ENCODE measurements at regions of chr14 and their contacts with region 1.

Region 1: GRCh38 chr14:73491256-73492042 is 716 bp downstream of the RIOX1 start:
- DNase-seq: peak in 8 of 9 donors; percentile 7 to 79 (median 60)
- ATAC-seq: peak; percentile 79
- H3K4me3 ChIP-seq: peak overlapping the region; percentile 91
- H3K4me3 Mint-ChIP-seq: peak overlapping the region; percentile 84 to 90 (median 88)
- H3K27ac ChIP-seq: peak overlapping the region; percentile 86
- H3K27ac Mint-ChIP-seq: peak overlapping the region in 8 of 9 donors; percentile 83 to 90 (median 88)
- H3K4me1 ChIP-seq: peaks cover 21 to 27% of the 10 kb centered on the region in 2 donors
- H3K4me1 Mint-ChIP-seq: peaks cover 8 to 59% (median 48%) of the 10 kb centered on the region in 7 donors
- H3K27me3 ChIP-seq: no peaks in the 10 kb centered on the region
- H3K27me3 Mint-ChIP-seq: peaks cover 0 to 17% (median 0%) of the 10 kb centered on the region in 5 donors

Region 2: GRCh38 chr14:73136387-73137225 is 354.8 kb before region 1 on chr14 and contains the start of gene PSEN1:
- CTCF ChIA-PET with region 1: no interaction called
- POLR2A ChIA-PET with region 1: interaction called, 6 read pairs
- intact Hi-C with region 1: loop called (anchors 1 kb)
- DNase-seq: peak; percentile 97 to 100 (median 98)
- ATAC-seq: peak; percentile 96
- H3K4me3 ChIP-seq: peak within 1 kb of the TSS; percentile 93
- H3K4me3 Mint-ChIP-seq: peak within 1 kb of the TSS; percentile 82 to 99 (median 91)
- H3K27ac ChIP-seq: peak within 1 kb of the TSS; percentile 98
- H3K27ac Mint-ChIP-seq: peak within 1 kb of the TSS; percentile 71 to 99 (median 96)
- H3K4me1 ChIP-seq: peaks cover 7 to 17% of the 10 kb centered on the region in 2 donors
- H3K4me1 Mint-ChIP-seq: peaks cover 17 to 39% (median 36%) of the 10 kb centered on the region in 7 donors
- H3K27me3 ChIP-seq: no peaks in the 10 kb centered on the region
- H3K27me3 Mint-ChIP-seq: no peaks in the 10 kb centered on the region
- total RNA-seq, gene PSEN1: 32.7 to 55.8 (median 49.3) TPM

Region 3: DNA sequence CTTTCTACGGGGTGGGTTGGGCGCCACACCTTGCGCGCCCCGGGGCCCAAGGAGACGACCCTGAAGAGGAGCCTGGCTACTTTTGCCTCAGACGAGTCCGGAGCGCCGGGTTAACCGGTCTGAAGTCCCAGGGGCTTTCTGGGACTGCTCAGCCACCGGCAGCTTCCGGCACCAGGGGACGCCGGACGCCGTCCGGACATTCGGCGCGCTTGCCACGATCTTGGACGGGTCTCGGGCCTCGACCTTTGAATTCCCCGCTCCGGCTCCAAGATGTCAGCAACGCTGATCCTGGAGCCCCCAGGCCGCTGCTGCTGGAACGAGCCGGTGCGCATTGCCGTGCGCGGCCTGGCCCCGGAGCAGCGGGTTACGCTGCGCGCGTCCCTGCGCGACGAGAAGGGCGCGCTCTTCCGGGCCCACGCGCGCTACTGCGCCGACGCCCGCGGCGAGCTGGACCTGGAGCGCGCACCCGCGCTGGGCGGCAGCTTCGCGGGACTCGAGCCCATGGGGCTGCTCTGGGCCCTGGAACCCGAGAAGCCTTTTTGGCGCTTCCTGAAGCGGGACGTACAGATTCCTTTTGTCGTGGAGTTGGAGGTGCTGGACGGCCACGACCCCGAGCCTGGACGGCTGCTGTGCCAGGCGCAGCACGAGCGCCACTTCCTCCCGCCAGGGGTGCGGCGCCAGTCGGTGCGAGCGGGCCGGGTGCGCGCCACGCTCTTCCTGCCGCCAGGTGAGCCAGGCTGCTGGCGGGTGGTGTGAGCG is 100.4 kb after region 1 on chr14 and contains the start of gene ACOT4:
- CTCF ChIA-PET with region 1: interaction called, 3 read pairs
- POLR2A ChIA-PET with region 1: interaction called, 11 read pairs
- intact Hi-C with region 1: no loop called
- DNase-seq: peak; percentile 43 to 77 (median 73)
- ATAC-seq: peak; percentile 93
- H3K4me3 ChIP-seq: peak within 1 kb of the TSS; percentile 74
- H3K4me3 Mint-ChIP-seq: peak within 1 kb of the TSS; percentile 61 to 87 (median 79)
- H3K27ac ChIP-seq: peak within 1 kb of the TSS; percentile 63
- H3K27ac Mint-ChIP-seq: peak within 1 kb of the TSS in 8 of 9 donors; percentile 29 to 89 (median 70)
- H3K4me1 ChIP-seq: no peaks in the 10 kb centered on the region
- H3K4me1 Mint-ChIP-seq: peaks cover 0 to 19% (median 5%) of the 10 kb centered on the region in 7 donors
- H3K27me3 ChIP-seq: no peaks in the 10 kb centered on the region
- H3K27me3 Mint-ChIP-seq: peaks cover 0 to 10% (median 0%) of the 10 kb centered on the region in 5 donors
- total RNA-seq, gene ACOT4: 0.69 to 1.0 (median 0.89) TPM

Region 4: GRCh38 chr14:73644531-73645247 is 153.2 kb after region 1 on chr14 and contains the start of gene DNAL1:
- CTCF ChIA-PET with region 1: no interaction called
- POLR2A ChIA-PET with region 1: interaction called, 17 read pairs
- intact Hi-C with region 1: loop called in 1 of 2 experiments (anchors 1 kb)
- DNase-seq: peak; percentile 80 to 93 (median 86)
- ATAC-seq: peak; percentile 99
- H3K4me3 ChIP-seq: peak within 1 kb of the TSS; percentile 92
- H3K4me3 Mint-ChIP-seq: peak within 1 kb of the TSS; percentile 89 to 99 (median 94)
- H3K27ac ChIP-seq: peak within 1 kb of the TSS; percentile 80
- H3K27ac Mint-ChIP-seq: peak within 1 kb of the TSS; percentile 86 to 98 (median 93)
- H3K4me1 ChIP-seq: peaks cover 7 to 9% of the 10 kb centered on the region in 2 donors
- H3K4me1 Mint-ChIP-seq: peaks cover 8 to 20% (median 16%) of the 10 kb centered on the region in 7 donors
- H3K27me3 ChIP-seq: no peaks in the 10 kb centered on the region
- H3K27me3 Mint-ChIP-seq: no peaks in the 10 kb centered on the region
- total RNA-seq, gene DNAL1: 3.6 to 8.4 (median 6.5) TPM

Region 5: DNA sequence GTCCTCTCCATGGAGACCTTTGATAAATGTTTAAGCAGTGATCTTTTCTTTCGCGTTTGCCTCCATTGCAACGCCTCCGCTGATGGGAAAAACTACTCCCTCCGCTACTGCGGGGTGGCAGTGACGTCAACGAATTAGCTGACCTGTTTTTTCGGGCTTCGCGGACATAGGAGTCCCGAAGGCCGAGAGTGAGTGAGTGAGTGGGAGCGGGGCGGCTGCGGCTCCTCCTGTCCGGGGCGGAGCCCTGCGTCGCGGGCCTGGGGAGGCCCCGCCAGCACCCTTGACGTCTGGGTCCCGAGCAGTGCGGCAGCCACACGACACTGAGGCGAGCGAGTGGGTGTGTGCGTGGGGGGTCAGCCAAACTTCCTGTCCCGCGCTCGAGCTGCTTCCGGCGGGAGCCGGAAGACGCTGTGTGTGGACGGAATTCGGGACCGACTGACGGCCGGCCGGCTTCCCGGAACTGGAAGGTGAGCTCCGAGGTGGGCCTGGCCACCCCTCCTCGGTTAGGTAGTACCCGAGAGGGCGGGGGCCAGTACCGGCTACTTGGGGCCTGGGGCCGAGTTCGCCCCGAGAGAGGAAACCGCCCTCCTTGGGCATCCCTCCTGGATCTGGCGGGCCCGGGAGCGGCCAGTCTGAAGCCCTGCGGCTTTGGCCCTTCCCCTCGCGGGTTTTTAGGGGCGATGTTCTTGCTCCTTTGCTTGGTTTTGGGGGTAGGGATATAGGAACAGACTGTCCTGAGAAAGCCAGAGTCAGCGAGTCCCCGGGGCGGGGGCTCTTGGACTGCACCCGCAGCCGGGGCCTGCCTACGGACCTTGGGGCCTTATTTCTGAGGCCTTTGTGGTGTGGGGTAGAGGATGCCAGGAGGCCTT is 395.2 kb after region 1 on chr14 and contains the start of gene ZNF410:
- CTCF ChIA-PET with region 1: no interaction called
- POLR2A ChIA-PET with region 1: no interaction called
- intact Hi-C with region 1: loop called in 1 of 2 experiments (anchors 10 kb)
- DNase-seq: peak; percentile 74 to 94 (median 83)
- ATAC-seq: peak; percentile 99
- H3K4me3 ChIP-seq: peak within 1 kb of the TSS; percentile 82
- H3K4me3 Mint-ChIP-seq: peak within 1 kb of the TSS; percentile 90 to 99 (median 98)
- H3K27ac ChIP-seq: peak within 1 kb of the TSS; percentile 97
- H3K27ac Mint-ChIP-seq: peak within 1 kb of the TSS; percentile 64 to 100 (median 99)
- H3K4me1 ChIP-seq: peaks cover 17 to 22% of the 10 kb centered on the region in 2 donors
- H3K4me1 Mint-ChIP-seq: peaks cover 24 to 56% (median 47%) of the 10 kb centered on the region in 7 donors
- H3K27me3 ChIP-seq: no peaks in the 10 kb centered on the region
- H3K27me3 Mint-ChIP-seq: no peaks in the 10 kb centered on the region
- total RNA-seq, gene ZNF410: 44.8 to 79.7 (median 51.1) TPM

Measured in naive thymus-derived CD4-positive, alpha-beta T cell (primary cell).